ENCODE measurements at regions of chr5 and their contacts with region 1.

Region 1: GRCh38 chr5:16616536-16617273 is at the start of gene RETREG1:
- DNase-seq: peak; percentile 82 to 93 (median 90)
- ATAC-seq: peak; percentile 76 to 77
- H3K4me3 Mint-ChIP-seq: peak within 1 kb of the TSS in 8 of 10 donors; percentile 96 to 99 (median 98)
- H3K27ac Mint-ChIP-seq: peak within 1 kb of the TSS in 9 of 10 donors; percentile 93 to 99 (median 97)
- H3K4me1 Mint-ChIP-seq: peaks cover 21 to 54% (median 50%) of the 10 kb centered on the region in 4 donors
- H3K27me3 Mint-ChIP-seq: no peaks in the 10 kb centered on the region
- polyA plus RNA-seq, gene RETREG1: 69.9 to 129 (median 126) TPM

Region 2: GRCh38 chr5:15285901-15286583 is 1330.7 kb before region 1 on chr5:
- POLR2A ChIA-PET with region 1: no interaction called
- DNase-seq: no peak
- ATAC-seq: no peak
- H3K4me3 Mint-ChIP-seq: no peak overlapping the region
- H3K27ac Mint-ChIP-seq: no peak overlapping the region
- H3K4me1 Mint-ChIP-seq: no peaks in the 10 kb centered on the region
- H3K27me3 Mint-ChIP-seq: no peaks in the 10 kb centered on the region

Region 3: DNA sequence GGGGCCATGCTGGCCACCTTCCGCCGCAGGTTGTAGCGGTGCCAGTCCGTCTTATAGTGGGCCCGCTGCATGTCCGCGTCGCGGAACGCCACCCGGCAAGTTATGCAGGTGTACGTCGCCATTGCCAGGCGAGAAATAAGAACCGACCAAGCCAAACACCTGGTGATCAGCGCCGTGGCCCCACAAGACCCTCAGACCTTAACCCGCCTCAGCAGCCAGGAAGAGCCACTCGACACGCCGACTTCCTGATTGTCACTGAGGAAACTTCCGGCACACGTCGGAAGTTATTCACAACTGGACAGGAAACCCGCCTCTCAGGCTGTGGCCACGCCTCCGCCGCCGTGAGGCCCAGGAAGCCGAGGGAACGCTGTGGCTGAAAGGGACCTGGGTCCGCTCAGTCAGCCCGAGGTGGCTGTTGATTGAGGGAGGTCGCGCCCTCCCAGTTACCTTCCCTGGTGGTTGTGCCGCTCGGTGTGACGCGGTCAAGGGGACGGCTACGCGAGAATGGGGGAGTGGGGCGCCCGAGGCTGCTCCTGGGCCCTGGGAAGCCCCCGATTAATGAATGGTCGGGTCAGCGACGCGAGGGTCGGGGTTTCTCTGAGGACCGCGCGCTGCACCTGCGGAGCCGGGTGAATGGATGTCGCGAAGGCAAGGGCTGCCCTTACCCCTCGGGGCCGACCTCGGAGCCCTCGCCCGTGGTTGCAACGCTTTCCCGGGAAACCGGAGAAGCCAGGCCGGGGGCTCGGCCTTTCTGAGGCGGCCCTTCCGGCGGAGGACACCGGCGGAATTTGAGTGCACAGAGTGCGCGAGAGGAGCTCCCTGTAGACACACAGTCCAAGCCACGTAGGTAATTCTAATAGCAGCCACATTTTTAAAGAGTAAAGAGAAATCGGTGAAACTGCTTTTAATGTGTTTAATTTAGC is 150.9 kb before region 1 on chr5 and contains the start of gene ZNF622:
- POLR2A ChIA-PET with region 1: interaction called, 14 read pairs
- DNase-seq: peak; percentile 74 to 94 (median 86)
- ATAC-seq: peak; percentile 91 to 93
- H3K4me3 Mint-ChIP-seq: peak within 1 kb of the TSS; percentile 92 to 99 (median 97)
- H3K27ac Mint-ChIP-seq: peak within 1 kb of the TSS; percentile 95 to 99 (median 98)
- H3K4me1 Mint-ChIP-seq: peaks cover 38 to 84% (median 81%) of the 10 kb centered on the region in 4 donors
- H3K27me3 Mint-ChIP-seq: no peaks in the 10 kb centered on the region
- polyA plus RNA-seq, gene ZNF622: 45.9 to 55.9 (median 48.4) TPM

Region 4: GRCh38 chr5:16626663-16627264 is 10.1 kb after region 1 on chr5:
- POLR2A ChIA-PET with region 1: interaction called, 295 read pairs
- DNase-seq: peak in 5 of 10 donors; percentile 23 to 68 (median 45)
- ATAC-seq: peak; percentile 54 to 56
- H3K4me3 Mint-ChIP-seq: peak overlapping the region; percentile 21 to 82 (median 42)
- H3K27ac Mint-ChIP-seq: peak overlapping the region; percentile 71 to 98 (median 94)
- H3K4me1 Mint-ChIP-seq: peaks cover 35 to 63% (median 59%) of the 10 kb centered on the region in 4 donors
- H3K27me3 Mint-ChIP-seq: no peaks in the 10 kb centered on the region

Region 5: GRCh38 chr5:16642862-16643261 is 26.2 kb after region 1 on chr5:
- POLR2A ChIA-PET with region 1: interaction called, 16 read pairs
- DNase-seq: no peak
- ATAC-seq: no peak
- H3K4me3 Mint-ChIP-seq: no peak overlapping the region
- H3K27ac Mint-ChIP-seq: peak overlapping the region in 4 of 10 donors; percentile 14 to 67 (median 37)
- H3K4me1 Mint-ChIP-seq: peaks cover 10 to 16% (median 12%) of the 10 kb centered on the region in 4 donors
- H3K27me3 Mint-ChIP-seq: no peaks in the 10 kb centered on the region

Region 6: DNA sequence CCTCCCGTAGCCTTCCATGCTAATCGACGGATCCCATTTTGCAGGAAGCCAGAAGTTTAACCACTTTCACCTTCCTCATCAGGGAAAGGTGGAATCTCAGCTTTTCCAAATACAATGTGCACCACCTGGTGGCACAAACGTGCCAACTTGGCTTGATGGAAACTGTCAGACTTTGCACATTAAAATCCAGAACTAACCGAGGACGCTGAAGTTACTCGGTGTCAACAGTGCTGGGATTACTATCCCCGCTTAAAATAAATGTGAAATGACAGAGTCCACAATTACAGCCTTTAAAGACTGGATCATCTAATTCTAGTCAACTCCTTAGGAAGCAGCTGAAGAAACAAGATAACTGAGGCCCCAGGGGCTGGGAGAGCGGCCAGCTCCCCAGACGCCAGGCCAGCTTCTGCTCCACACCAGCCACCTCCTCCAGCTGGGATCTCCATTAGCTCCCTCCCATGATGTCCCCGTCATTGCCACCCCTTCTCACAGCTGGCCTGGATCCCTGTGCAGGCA is 50.2 kb after region 1 on chr5:
- POLR2A ChIA-PET with region 1: interaction called, 67 read pairs
- DNase-seq: peak in 9 of 10 donors; percentile 10 to 69 (median 32)
- ATAC-seq: peak in 1 of 2 donors; percentile 65
- H3K4me3 Mint-ChIP-seq: peak overlapping the region in 2 of 10 donors; percentile 52 to 72
- H3K27ac Mint-ChIP-seq: peak overlapping the region in 4 of 10 donors; percentile 72 to 79 (median 79)
- H3K4me1 Mint-ChIP-seq: peaks cover 0 to 14% (median 6%) of the 10 kb centered on the region in 4 donors
- H3K27me3 Mint-ChIP-seq: no peaks in the 10 kb centered on the region

Region 7: GRCh38 chr5:16673241-16674201 is 56.8 kb after region 1 on chr5:
- POLR2A ChIA-PET with region 1: interaction called, 67 read pairs
- DNase-seq: peak in 9 of 10 donors; percentile 18 to 73 (median 42)
- ATAC-seq: peak; percentile 89
- H3K4me3 Mint-ChIP-seq: peak overlapping the region in 9 of 10 donors; percentile 48 to 81 (median 62)
- H3K27ac Mint-ChIP-seq: peak overlapping the region; percentile 2 to 83 (median 50)
- H3K4me1 Mint-ChIP-seq: peaks cover 5 to 17% (median 13%) of the 10 kb centered on the region in 4 donors
- H3K27me3 Mint-ChIP-seq: peaks cover 0 to 1% (median 0%) of the 10 kb centered on the region in 5 donors

Measured in naive thymus-derived CD8-positive, alpha-beta T cell (primary cell).